Naive thymus-derived CD4-positive, alpha-beta T cell (primary cell): ENCODE measurements at regions of chr22 and their contacts with region 1.

Region 1: DNA sequence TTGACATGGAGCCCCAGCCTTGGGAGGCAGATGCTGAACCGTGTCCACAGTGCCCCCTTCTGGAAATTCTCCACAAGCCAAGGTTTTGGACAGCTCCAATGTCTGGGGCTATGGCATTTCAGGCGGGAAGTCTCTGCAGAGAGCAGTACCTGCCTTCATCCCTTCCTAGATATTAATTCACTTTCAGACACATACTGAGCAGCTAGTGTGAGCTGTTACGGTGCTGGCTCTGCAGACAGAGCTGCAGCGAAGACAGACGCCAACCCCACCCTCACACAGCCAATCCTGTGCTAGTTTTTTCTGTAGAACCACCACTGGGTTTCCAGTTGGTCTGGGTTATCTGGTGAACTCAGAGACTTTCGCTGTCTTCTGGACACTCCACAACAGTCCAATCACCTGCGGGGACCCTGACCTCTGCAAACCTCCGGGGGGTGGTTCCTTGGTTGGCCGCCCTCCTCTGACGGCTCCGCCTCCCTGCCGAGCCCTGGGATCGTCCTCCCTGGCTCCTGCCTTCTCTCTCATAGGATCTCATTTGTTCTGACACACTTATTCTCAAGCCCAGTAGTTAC is 9.1 kb downstream of the LMF2 start:
- DNase-seq: peak in 8 of 9 donors; percentile 60 to 76 (median 70)
- ATAC-seq: peak; percentile 92
- H3K4me3 ChIP-seq: no peak overlapping the region
- H3K4me3 Mint-ChIP-seq: no peak overlapping the region
- H3K27ac ChIP-seq: no peak overlapping the region
- H3K27ac Mint-ChIP-seq: no peak overlapping the region
- H3K4me1 ChIP-seq: no peaks in the 10 kb centered on the region
- H3K4me1 Mint-ChIP-seq: peaks cover 3 to 10% (median 9%) of the 10 kb centered on the region in 7 donors
- H3K27me3 ChIP-seq: no peaks in the 10 kb centered on the region
- H3K27me3 Mint-ChIP-seq: peaks cover 0 to 5% (median 0%) of the 10 kb centered on the region in 5 donors

Region 2: DNA sequence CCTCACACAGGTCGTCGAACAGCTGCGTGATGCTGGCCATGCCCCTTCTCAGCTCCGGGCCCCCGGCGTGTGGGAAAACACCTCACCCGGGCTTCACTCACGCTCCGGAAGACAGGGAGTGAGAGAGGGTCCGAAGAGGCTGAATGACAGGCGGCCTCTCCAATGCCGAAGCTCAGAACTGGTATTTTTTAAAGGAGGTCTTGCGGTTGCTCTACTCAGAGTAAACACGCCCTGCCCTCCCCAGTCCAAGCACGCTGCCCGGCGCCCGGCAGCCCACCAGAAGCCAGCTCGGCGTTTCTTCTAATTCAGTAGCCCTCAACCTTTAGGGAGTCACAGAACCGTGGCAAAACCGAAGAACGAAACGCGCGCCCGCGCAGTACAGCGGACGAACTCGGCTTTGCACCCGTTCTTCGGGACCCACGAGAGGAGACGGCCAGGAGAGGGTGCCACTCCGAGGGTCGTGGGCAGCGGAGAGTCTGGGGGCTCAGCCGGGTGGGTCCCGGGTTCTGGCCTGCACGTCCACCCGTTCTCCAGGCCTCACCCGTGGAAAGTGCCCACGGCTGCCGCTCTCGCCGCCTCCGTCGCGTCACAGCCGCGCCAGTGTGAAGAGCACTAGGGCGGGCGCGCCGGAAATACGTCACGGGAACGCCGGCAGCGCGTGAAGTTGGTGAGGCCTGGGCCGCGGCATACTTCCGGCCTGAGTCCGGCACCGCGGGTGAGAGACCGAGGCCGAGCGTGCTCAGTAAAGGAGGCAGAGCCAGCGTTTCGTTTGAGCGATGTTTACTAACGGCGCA is 253.8 kb before region 1 on chr22 and contains the start of gene TUBGCP6:
- CTCF ChIA-PET with region 1: interaction called, 6 read pairs
- POLR2A ChIA-PET with region 1: no interaction called
- intact Hi-C with region 1: loop called in 1 of 2 experiments (anchors 1 kb)
- DNase-seq: peak; percentile 88 to 95 (median 93)
- ATAC-seq: peak; percentile 88
- H3K4me3 ChIP-seq: peak within 1 kb of the TSS; percentile 73
- H3K4me3 Mint-ChIP-seq: peak within 1 kb of the TSS; percentile 76 to 100 (median 98)
- H3K27ac ChIP-seq: peak within 1 kb of the TSS; percentile 96
- H3K27ac Mint-ChIP-seq: peak within 1 kb of the TSS; percentile 91 to 100 (median 100)
- H3K4me1 ChIP-seq: peaks cover 39 to 51% of the 10 kb centered on the region in 2 donors
- H3K4me1 Mint-ChIP-seq: peaks cover 16 to 52% (median 40%) of the 10 kb centered on the region in 7 donors
- H3K27me3 ChIP-seq: no peaks in the 10 kb centered on the region
- H3K27me3 Mint-ChIP-seq: no peaks in the 10 kb centered on the region
- total RNA-seq, gene TUBGCP6: 67.8 to 146 (median 134) TPM

Region 3: DNA sequence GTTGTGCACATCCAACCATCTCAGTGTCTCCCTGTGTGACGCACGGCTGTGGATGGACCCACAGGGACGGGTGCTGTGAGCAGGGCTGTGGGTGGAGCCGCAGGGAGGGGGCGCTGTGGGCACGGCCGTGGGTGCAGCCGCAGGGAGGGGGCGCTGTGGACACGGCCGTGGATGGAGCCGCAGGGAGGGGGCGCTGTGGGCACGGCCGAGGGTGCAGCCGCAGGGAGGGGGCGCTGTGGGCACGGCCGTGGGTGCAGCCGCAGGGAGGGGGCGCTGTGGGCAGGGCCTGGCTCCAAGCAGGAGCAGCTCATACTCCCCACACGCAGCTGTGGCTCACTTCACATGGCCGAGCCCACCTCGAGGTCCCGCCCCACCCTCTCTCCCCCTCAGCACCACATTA is 222.3 kb before region 1 on chr22:
- CTCF ChIA-PET with region 1: no interaction called
- POLR2A ChIA-PET with region 1: no interaction called
- intact Hi-C with region 1: loop called (anchors 1 to 10 kb)
- DNase-seq: peak in 2 of 9 donors; percentile 22 to 27
- ATAC-seq: peak; percentile 86
- H3K4me3 ChIP-seq: no peak overlapping the region
- H3K4me3 Mint-ChIP-seq: no peak overlapping the region
- H3K27ac ChIP-seq: no peak overlapping the region
- H3K27ac Mint-ChIP-seq: no peak overlapping the region
- H3K4me1 ChIP-seq: peaks cover 3 to 4% of the 10 kb centered on the region in 2 donors
- H3K4me1 Mint-ChIP-seq: peaks cover 0 to 12% (median 5%) of the 10 kb centered on the region in 7 donors
- H3K27me3 ChIP-seq: no peaks in the 10 kb centered on the region
- H3K27me3 Mint-ChIP-seq: peaks cover 0 to 12% (median 0%) of the 10 kb centered on the region in 5 donors

Region 4: DNA sequence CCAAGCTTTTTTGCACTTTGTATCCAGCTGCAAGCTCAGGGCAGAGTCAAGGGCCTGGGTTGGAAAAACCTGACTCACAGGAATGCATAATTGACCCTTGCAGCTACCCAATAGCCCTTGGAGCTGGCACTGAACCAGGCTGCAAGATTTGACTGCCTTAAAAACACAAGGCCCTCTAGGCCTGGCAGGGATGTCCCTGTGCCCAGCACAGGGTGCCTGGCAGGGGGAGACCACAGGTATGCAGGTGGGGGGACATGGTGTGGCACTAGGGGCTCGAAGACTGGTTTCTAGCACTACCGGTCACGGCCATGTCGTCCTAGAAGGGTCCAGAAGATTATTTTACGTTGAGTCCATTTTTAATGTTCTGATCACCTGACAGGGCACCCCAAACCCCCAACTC is 53.7 kb before region 1 on chr22:
- CTCF ChIA-PET with region 1: no interaction called
- POLR2A ChIA-PET with region 1: interaction called, 3 read pairs
- intact Hi-C with region 1: loop called in 1 of 2 experiments (anchors 10 kb)
- DNase-seq: no peak
- ATAC-seq: no peak
- H3K4me3 ChIP-seq: no peak overlapping the region
- H3K4me3 Mint-ChIP-seq: peak overlapping the region in 1 of 10 donors; percentile 69
- H3K27ac ChIP-seq: peak overlapping the region; percentile 55
- H3K27ac Mint-ChIP-seq: peak overlapping the region in 8 of 9 donors; percentile 32 to 84 (median 68)
- H3K4me1 ChIP-seq: peaks cover 9 to 20% of the 10 kb centered on the region in 2 donors
- H3K4me1 Mint-ChIP-seq: peaks cover 0 to 25% (median 19%) of the 10 kb centered on the region in 7 donors
- H3K27me3 ChIP-seq: no peaks in the 10 kb centered on the region
- H3K27me3 Mint-ChIP-seq: no peaks in the 10 kb centered on the region

Region 5: GRCh38 chr22:50469377-50470305 is 28.8 kb before region 1 on chr22:
- CTCF ChIA-PET with region 1: interaction called, 8 read pairs
- POLR2A ChIA-PET with region 1: interaction called, 10 read pairs
- intact Hi-C with region 1: loop called in 1 of 2 experiments (anchors 1 kb)
- DNase-seq: peak; percentile 77 to 96 (median 92)
- ATAC-seq: peak; percentile 95
- H3K4me3 ChIP-seq: peak overlapping the region; percentile 65
- H3K4me3 Mint-ChIP-seq: peak overlapping the region; percentile 76 to 100 (median 90)
- H3K27ac ChIP-seq: peak overlapping the region; percentile 90
- H3K27ac Mint-ChIP-seq: peak overlapping the region; percentile 88 to 99 (median 93)
- H3K4me1 ChIP-seq: peaks cover 53 to 57% of the 10 kb centered on the region in 2 donors
- H3K4me1 Mint-ChIP-seq: peaks cover 45 to 69% (median 61%) of the 10 kb centered on the region in 7 donors
- H3K27me3 ChIP-seq: no peaks in the 10 kb centered on the region
- H3K27me3 Mint-ChIP-seq: no peaks in the 10 kb centered on the region

Region 6: GRCh38 chr22:50525390-50526068 is 27.1 kb after region 1 on chr22 and contains the start of gene SCO2:
- CTCF ChIA-PET with region 1: interaction called, 16 read pairs
- POLR2A ChIA-PET with region 1: interaction called, 7 read pairs
- intact Hi-C with region 1: no loop called
- DNase-seq: peak; percentile 97 to 99 (median 98)
- ATAC-seq: peak; percentile 77
- H3K4me3 ChIP-seq: peak within 1 kb of the TSS; percentile 77
- H3K4me3 Mint-ChIP-seq: peak within 1 kb of the TSS; percentile 77 to 96 (median 89)
- H3K27ac ChIP-seq: peak within 1 kb of the TSS; percentile 87
- H3K27ac Mint-ChIP-seq: peak within 1 kb of the TSS; percentile 78 to 93 (median 86)
- H3K4me1 ChIP-seq: peaks cover 14 to 21% of the 10 kb centered on the region in 2 donors
- H3K4me1 Mint-ChIP-seq: peaks cover 8 to 33% (median 26%) of the 10 kb centered on the region in 7 donors
- H3K27me3 ChIP-seq: no peaks in the 10 kb centered on the region
- H3K27me3 Mint-ChIP-seq: peaks cover 0 to 6% (median 0%) of the 10 kb centered on the region in 5 donors
- total RNA-seq, gene SCO2: 2.2 to 12.0 (median 5.5) TPM